PC-9 (cell line): ENCODE measurements at regions of chr20 and their contacts with region 1.

Region 1: GRCh38 chr20:48657475-48658470 is 170.0 kb downstream of the PREX1 start:
- DNase-seq: peak; percentile 67 to 73
- H3K4me3 ChIP-seq: no peak overlapping the region
- H3K27ac ChIP-seq: no peak overlapping the region
- H3K4me1 ChIP-seq: no peaks in the 10 kb centered on the region
- H3K27me3 ChIP-seq: no peaks in the 10 kb centered on the region
- CTCF ChIP-seq: peak; percentile 98

Region 2: GRCh38 chr20:48619473-48620268 is 38.1 kb before region 1 on chr20:
- CTCF ChIA-PET with region 1: no interaction called
- POLR2A ChIA-PET with region 1: no interaction called
- intact Hi-C with region 1: no loop called
- DNase-seq: peak; percentile 56 to 58
- H3K4me3 ChIP-seq: peak overlapping the region; percentile 54; the same call in 1 of the 2 replicates
- H3K27ac ChIP-seq: peak overlapping the region; percentile 94
- H3K4me1 ChIP-seq: peaks cover 44% of the 10 kb centered on the region
- H3K27me3 ChIP-seq: no peaks in the 10 kb centered on the region
- CTCF ChIP-seq: no peak

Region 3: GRCh38 chr20:48921151-48921898 is 263.6 kb after region 1 on chr20 and contains the start of gene ARFGEF2:
- CTCF ChIA-PET with region 1: interaction called, 3 read pairs
- POLR2A ChIA-PET with region 1: no interaction called
- intact Hi-C with region 1: loop called (anchors 5 kb)
- DNase-seq: peak; percentile 82 to 97
- H3K4me3 ChIP-seq: peak within 1 kb of the TSS; percentile 65
- H3K27ac ChIP-seq: peak within 1 kb of the TSS; percentile 90
- H3K4me1 ChIP-seq: peaks cover 36% of the 10 kb centered on the region
- H3K27me3 ChIP-seq: no peaks in the 10 kb centered on the region
- CTCF ChIP-seq: peak; percentile 7; the same call in 1 of the 2 replicates
- total RNA-seq, gene ARFGEF2: 39.9 and 47.0 TPM in 2 replicates

Region 4: DNA sequence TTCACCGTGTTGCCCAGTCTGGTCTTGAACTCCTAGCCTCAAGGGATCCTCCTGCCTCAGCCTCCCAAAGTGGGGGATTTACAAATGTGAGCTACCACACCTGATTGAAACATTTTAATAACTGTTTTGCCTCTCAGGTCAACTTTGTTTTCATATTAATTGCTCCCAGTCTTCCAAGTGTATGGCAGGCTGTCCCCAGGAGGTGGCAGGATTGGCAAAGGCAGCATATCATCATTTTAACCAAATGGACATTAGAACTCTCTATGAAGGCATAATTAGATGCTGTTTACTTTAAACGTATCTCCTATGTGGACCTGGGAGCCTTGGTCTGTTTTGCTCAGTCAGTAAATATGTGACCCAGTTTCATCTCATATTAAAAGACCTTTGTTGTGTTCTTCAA is 329.1 kb after region 1 on chr20:
- CTCF ChIA-PET with region 1: interaction called, 4 read pairs
- POLR2A ChIA-PET with region 1: no interaction called
- intact Hi-C with region 1: loop called (anchors 5 kb)
- DNase-seq: no peak
- H3K4me3 ChIP-seq: no peak overlapping the region
- H3K27ac ChIP-seq: no peak overlapping the region
- H3K4me1 ChIP-seq: peaks cover 18% of the 10 kb centered on the region
- H3K27me3 ChIP-seq: no peaks in the 10 kb centered on the region
- CTCF ChIP-seq: peak; percentile 65